OCI-LY7 (cell line): ENCODE measurements at regions of chr6 and their contacts with region 1.

Region 1: GRCh38 chr6:107941627-107942026 is 16.4 kb downstream of the SEC63 start:
- DNase-seq: no peak
- H3K4me3 ChIP-seq: no peak overlapping the region
- H3K27ac ChIP-seq: no peak overlapping the region
- H3K4me1 ChIP-seq: peaks cover 7% of the 10 kb centered on the region
- CTCF ChIP-seq: no peak

Region 2: DNA sequence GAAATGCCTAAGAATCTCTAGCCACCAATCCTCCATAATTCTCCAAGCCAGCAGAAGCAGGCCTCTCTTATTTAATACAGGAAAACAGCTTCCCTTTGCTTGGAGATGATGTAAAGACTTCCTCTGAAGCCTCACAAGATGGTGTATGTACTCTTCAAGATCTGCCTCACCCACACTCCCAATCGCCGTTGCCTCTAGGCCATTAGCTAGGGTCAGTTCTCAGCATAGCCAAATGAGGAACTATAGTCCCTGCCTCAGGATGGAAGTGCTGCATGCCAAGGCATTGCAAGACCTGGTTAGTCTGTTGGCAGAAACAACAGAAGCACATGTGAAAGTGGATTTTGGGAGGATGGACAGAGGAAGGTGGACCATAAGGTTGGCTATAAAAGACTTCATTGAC is 256.6 kb before region 1 on chr6:
- CTCF ChIA-PET with region 1: no interaction called
- POLR2A ChIA-PET with region 1: interaction called, 11 read pairs
- intact Hi-C with region 1: no loop called
- DNase-seq: no peak
- H3K4me3 ChIP-seq: no peak overlapping the region
- H3K27ac ChIP-seq: no peak overlapping the region
- H3K4me1 ChIP-seq: no peaks in the 10 kb centered on the region
- CTCF ChIP-seq: no peak